ENCODE measurements at regions of chr7 and their contacts with region 1.

Region 1: GRCh38 chr7:12322284-12322902 is 81.3 kb downstream of the VWDE start:
- DNase-seq: no peak
- ATAC-seq: no peak
- H3K4me3 ChIP-seq: no peak overlapping the region
- H3K27ac ChIP-seq: no peak overlapping the region
- H3K4me1 ChIP-seq: no peaks in the 10 kb centered on the region
- H3K27me3 ChIP-seq: peaks cover 0 to 12% (median 0%) of the 10 kb centered on the region in 7 donors
- CTCF ChIP-seq: peak; percentile 30 to 79 (median 68)

Region 2: GRCh38 chr7:11427686-11428273 is 894.6 kb before region 1 on chr7:
- intact Hi-C with region 1: loop called (anchors 2 to 10 kb)
- DNase-seq: peak in 1 of 2 donors; percentile 29
- ATAC-seq: peak in 1 of 8 donors; percentile 42
- H3K4me3 ChIP-seq: no peak overlapping the region
- H3K27ac ChIP-seq: no peak overlapping the region
- H3K4me1 ChIP-seq: peaks cover 0 to 8% (median 0%) of the 10 kb centered on the region in 9 donors
- H3K27me3 ChIP-seq: no peaks in the 10 kb centered on the region
- CTCF ChIP-seq: peak; percentile 41 to 89 (median 75)

Region 3: DNA sequence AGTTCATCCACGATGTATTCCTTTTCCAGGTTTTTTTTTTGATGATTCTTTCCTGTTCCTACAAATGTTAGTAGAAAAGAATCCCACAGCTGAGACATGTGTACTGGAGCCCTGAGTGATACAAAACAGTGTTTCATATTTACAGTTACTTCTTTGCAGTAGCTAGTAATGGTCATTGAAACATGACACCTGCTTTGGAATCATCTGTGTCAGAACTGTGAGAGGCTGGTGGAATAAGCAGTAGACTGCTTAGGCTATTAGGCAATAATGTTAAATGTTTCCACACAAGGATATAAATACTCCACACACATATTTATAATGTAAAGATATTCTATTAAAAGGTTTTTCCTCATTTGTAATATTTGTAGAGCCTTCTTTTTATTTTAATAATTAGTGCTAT is 884.4 kb before region 1 on chr7:
- intact Hi-C with region 1: loop called in 1 of 10 experiments (anchors 5 kb)
- DNase-seq: no peak
- ATAC-seq: no peak
- H3K4me3 ChIP-seq: no peak overlapping the region
- H3K27ac ChIP-seq: no peak overlapping the region
- H3K4me1 ChIP-seq: no peaks in the 10 kb centered on the region
- H3K27me3 ChIP-seq: no peaks in the 10 kb centered on the region
- CTCF ChIP-seq: no peak

Region 4: DNA sequence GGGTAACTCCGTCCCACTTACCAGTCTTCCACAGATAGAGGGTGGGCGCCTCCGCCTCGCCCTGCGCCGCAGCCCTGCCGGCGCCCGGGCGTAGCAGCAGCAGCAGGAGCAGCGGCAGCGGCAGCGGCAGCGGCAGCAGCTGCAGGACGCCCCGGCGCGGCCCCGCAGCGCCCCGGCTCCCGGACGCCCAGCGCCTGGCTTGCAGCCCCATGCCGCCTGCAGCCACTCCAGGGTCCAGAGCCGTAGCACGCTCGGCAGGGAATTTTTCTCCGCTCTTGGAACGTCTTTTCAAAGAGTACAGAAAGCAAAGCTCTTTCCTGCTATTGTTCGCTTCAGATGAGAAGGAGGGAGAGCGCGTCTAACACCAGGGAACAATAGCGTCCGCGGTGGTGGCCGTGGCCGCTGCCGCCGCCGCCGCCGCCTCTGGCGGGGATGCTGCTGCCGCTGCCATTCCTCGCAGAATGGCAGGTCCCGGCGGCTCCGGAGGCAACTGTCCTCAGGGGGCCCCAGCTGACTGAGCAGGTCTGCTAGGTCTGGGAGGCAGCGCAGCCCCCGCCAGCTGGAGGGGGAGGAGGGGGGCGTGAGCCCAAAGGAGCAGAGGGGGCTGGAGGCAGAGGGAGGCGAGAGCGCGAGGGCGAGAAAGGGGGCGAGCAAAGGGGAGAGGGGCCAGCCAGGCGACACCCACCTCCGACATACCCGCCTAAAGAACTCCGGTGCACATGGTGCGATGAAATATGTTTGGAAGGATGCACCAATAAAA is 490.5 kb before region 1 on chr7 and contains the start of gene THSD7A:
- intact Hi-C with region 1: loop called in 4 of 10 experiments (anchors 5 to 10 kb)
- DNase-seq: peak; percentile 23 to 48
- ATAC-seq: peak; percentile 83 to 94 (median 88)
- H3K4me3 ChIP-seq: peak within 1 kb of the TSS; percentile 30 to 75 (median 62)
- H3K27ac ChIP-seq: peak within 1 kb of the TSS; percentile 0 to 72 (median 56)
- H3K4me1 ChIP-seq: peaks cover 0 to 25% (median 13%) of the 10 kb centered on the region in 9 donors
- H3K27me3 ChIP-seq: peaks cover 0 to 23% (median 0%) of the 10 kb centered on the region in 7 donors
- CTCF ChIP-seq: peak in 4 of 9 donors; percentile 4 to 33 (median 12)
- total RNA-seq, gene THSD7A: 0.67 to 3.4 (median 1.7) TPM

Region 5: GRCh38 chr7:12067141-12067831 is 255.1 kb before region 1 on chr7:
- intact Hi-C with region 1: loop called (anchors 2 to 10 kb)
- DNase-seq: peak in 1 of 2 donors; percentile 26
- ATAC-seq: peak in 4 of 8 donors; percentile 33 to 73 (median 62)
- H3K4me3 ChIP-seq: no peak overlapping the region
- H3K27ac ChIP-seq: no peak overlapping the region
- H3K4me1 ChIP-seq: no peaks in the 10 kb centered on the region
- H3K27me3 ChIP-seq: no peaks in the 10 kb centered on the region
- CTCF ChIP-seq: peak; percentile 24 to 66 (median 61)

Measured in heart right ventricle (tissue), 16 donors.